K562 (cell line): ENCODE measurements at regions of chr11 and their contacts with region 1.

Region 1: GRCh38 chr11:62324738-62325556 is 12.3 kb upstream of the ASRGL1 start:
- DNase-seq: peak; percentile 79 to 85 (median 80)
- ATAC-seq: peak; percentile 100
- H3K4me3 ChIP-seq: no peak overlapping the region
- H3K27ac ChIP-seq: no peak overlapping the region
- H3K4me1 ChIP-seq: no peaks in the 10 kb centered on the region; a peak in 1 of 5 replicates
- H3K27me3 ChIP-seq: peaks cover 12 to 18% of the 10 kb centered on the region in 2 experiments; a peak in 4 of 5 replicates
- CTCF ChIP-seq: peak; percentile 98 to 100 (median 99)
- EP300 ChIP-seq: no peak
- POLR2A ChIP-seq: no peak
- RAD21 ChIP-seq: peak; percentile 86 to 95

Region 2: DNA sequence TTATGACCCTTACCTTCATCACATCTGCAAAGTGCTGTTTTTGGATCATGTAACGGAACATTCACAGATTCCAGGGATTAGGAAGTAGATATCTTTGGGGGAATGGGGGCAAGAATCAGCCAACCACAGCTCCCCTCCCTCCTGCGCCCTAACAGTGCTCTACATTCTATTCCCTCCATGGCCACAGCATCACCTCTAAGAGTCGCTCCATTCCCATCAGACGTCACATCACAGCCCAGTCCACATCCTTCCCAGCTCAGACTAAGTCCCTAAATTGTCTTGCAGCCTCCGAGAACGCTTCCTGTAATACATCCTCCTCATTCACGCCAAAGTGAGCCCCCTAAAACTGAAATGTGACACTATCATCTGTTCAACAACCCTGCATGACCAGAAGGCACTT is 129.0 kb before region 1 on chr11:
- CTCF ChIA-PET with region 1: no interaction called
- POLR2A ChIA-PET with region 1: no interaction called
- in situ Hi-C with region 1: no loop called
- intact Hi-C with region 1: loop called (anchors 1 kb)
- DNase-seq: peak; percentile 30 to 39 (median 34)
- ATAC-seq: peak; percentile 95
- H3K4me3 ChIP-seq: no peak overlapping the region
- H3K27ac ChIP-seq: no peak overlapping the region
- H3K4me1 ChIP-seq: no peaks in the 10 kb centered on the region; a peak in 1 of 5 replicates
- H3K27me3 ChIP-seq: peaks cover 9 to 34% of the 10 kb centered on the region in 2 experiments; a peak in 4 of 5 replicates
- CTCF ChIP-seq: peak; percentile 66 to 73 (median 69)
- EP300 ChIP-seq: no peak
- POLR2A ChIP-seq: no peak
- RAD21 ChIP-seq: peak in 1 of 2 experiments; percentile 56; a peak in 3 of 4 replicates

Region 3: GRCh38 chr11:62273789-62274275 is 51.1 kb before region 1 on chr11:
- CTCF ChIA-PET with region 1: no interaction called
- POLR2A ChIA-PET with region 1: no interaction called
- in situ Hi-C with region 1: no loop called
- intact Hi-C with region 1: no loop called
- DNase-seq: no peak
- ATAC-seq: peak; percentile 39; the same call in 2 of the 3 replicates
- H3K4me3 ChIP-seq: no peak overlapping the region
- H3K27ac ChIP-seq: no peak overlapping the region
- H3K4me1 ChIP-seq: 0 out of 5 replicates have a peak, but pooled peaks cover 0 to 5% of the 10 kb centered on the region in 2 experiments
- H3K27me3 ChIP-seq: peaks cover 9 to 13% of the 10 kb centered on the region in 2 experiments; a peak in 3 of 5 replicates
- CTCF ChIP-seq: no peak
- EP300 ChIP-seq: no peak
- POLR2A ChIP-seq: no peak
- RAD21 ChIP-seq: no peak

Region 4: GRCh38 chr11:62295504-62295903 is 29.4 kb before region 1 on chr11:
- CTCF ChIA-PET with region 1: no interaction called
- POLR2A ChIA-PET with region 1: no interaction called
- in situ Hi-C with region 1: no loop called
- intact Hi-C with region 1: no loop called
- DNase-seq: peak in 1 of 4 experiments; percentile 11
- ATAC-seq: peak; percentile 71
- H3K4me3 ChIP-seq: no peak overlapping the region
- H3K27ac ChIP-seq: no peak overlapping the region
- H3K4me1 ChIP-seq: no peaks in the 10 kb centered on the region
- H3K27me3 ChIP-seq: peaks cover 0 to 19% of the 10 kb centered on the region in 2 experiments; a peak in 2 of 5 replicates
- CTCF ChIP-seq: no peak
- EP300 ChIP-seq: no peak
- POLR2A ChIP-seq: no peak
- RAD21 ChIP-seq: no peak